Activated CD4-positive, alpha-beta T cell treated with anti-CD3 and anti-CD28 coated beads for 36 hours (primary cell): ENCODE measurements at regions of chr13 and their contacts with region 1.

Region 1: DNA sequence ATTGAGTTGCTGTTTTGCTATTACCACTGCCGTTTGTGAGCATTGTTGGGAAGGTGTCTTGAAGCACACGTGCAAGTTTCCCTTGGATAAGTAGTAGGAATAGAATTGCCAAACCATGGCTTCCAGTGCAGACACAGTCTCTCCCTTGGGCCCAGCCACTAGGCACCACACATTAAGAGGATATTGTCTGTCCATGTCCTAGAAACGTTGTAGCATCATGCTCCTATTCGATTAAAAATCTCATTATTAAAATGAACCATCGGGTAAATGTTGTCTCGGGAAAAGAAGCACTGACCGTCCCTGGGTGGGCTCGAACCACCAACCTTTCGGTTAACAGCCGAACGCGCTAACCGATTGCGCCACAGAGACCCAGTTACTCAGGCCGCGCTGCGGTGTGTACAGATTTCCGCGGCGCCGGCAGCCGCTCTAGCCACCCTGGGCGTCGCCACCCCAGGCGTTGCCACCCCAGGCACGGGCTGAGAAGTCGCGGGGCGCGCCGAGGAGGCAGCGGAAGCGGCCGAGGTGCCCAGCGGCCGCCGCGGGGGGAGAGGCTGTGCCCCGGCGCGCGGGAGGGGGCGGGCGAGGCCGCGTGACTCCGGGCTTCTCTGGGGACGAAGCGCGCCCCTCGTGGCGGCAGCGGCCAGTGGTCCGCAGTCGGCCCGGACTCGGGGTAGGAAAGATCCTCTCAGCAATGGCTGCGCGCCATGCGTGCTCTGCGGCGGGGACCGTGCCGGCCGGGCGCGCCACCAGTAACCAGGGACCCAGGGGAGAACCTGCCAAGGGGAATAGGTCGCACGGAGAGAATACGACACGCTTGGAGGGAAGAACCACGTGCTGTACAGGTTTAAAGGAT is 56.2 kb downstream of the USPL1 start:
- DNase-seq: peak; percentile 92
- ATAC-seq: peak; percentile 97
- H3K4me3 Mint-ChIP-seq: peak overlapping the region; percentile 72
- H3K27ac Mint-ChIP-seq: peak overlapping the region; percentile 73
- H3K4me1 Mint-ChIP-seq: peaks cover 12% of the 10 kb centered on the region
- H3K27me3 Mint-ChIP-seq: no peaks in the 10 kb centered on the region

Region 2: DNA sequence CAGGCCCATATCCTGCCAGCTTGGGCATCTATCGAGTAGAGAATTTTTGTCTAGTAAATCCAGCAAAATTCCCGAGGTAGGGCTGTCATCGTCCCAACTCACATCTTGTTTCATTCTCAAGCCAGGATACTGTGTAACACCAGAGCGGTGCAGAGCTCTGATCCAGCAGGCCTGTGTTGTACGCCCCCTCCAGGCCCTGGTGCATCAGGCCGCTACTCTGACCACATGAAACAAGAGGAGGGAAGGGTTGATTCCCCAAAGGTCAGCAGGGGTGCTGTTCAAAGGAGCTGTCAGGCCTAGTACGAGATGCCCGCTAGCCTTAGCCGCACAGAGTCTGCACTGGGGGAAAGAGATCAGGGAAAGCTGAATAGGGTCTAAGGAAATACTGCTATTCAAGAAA is 1354.4 kb before region 1 on chr13:
- CTCF ChIA-PET with region 1: no interaction called
- POLR2A ChIA-PET with region 1: no interaction called
- intact Hi-C with region 1: no loop called
- DNase-seq: no peak
- ATAC-seq: no peak
- H3K4me3 Mint-ChIP-seq: no peak overlapping the region
- H3K27ac Mint-ChIP-seq: no peak overlapping the region
- H3K4me1 Mint-ChIP-seq: no peaks in the 10 kb centered on the region
- H3K27me3 Mint-ChIP-seq: peaks cover 5% of the 10 kb centered on the region

Region 3: GRCh38 chr13:30711375-30711774 is 37.5 kb after region 1 on chr13:
- CTCF ChIA-PET with region 1: no interaction called
- POLR2A ChIA-PET with region 1: no interaction called
- intact Hi-C with region 1: loop called in 1 of 2 experiments (anchors 2 kb)
- DNase-seq: no peak
- ATAC-seq: peak; percentile 93
- H3K4me3 Mint-ChIP-seq: no peak overlapping the region
- H3K27ac Mint-ChIP-seq: no peak overlapping the region
- H3K4me1 Mint-ChIP-seq: peaks cover 12% of the 10 kb centered on the region
- H3K27me3 Mint-ChIP-seq: peaks cover 5% of the 10 kb centered on the region